RWPE1 (cell line): ENCODE measurements at regions of chr12 and their contacts with region 1.

Region 1: DNA sequence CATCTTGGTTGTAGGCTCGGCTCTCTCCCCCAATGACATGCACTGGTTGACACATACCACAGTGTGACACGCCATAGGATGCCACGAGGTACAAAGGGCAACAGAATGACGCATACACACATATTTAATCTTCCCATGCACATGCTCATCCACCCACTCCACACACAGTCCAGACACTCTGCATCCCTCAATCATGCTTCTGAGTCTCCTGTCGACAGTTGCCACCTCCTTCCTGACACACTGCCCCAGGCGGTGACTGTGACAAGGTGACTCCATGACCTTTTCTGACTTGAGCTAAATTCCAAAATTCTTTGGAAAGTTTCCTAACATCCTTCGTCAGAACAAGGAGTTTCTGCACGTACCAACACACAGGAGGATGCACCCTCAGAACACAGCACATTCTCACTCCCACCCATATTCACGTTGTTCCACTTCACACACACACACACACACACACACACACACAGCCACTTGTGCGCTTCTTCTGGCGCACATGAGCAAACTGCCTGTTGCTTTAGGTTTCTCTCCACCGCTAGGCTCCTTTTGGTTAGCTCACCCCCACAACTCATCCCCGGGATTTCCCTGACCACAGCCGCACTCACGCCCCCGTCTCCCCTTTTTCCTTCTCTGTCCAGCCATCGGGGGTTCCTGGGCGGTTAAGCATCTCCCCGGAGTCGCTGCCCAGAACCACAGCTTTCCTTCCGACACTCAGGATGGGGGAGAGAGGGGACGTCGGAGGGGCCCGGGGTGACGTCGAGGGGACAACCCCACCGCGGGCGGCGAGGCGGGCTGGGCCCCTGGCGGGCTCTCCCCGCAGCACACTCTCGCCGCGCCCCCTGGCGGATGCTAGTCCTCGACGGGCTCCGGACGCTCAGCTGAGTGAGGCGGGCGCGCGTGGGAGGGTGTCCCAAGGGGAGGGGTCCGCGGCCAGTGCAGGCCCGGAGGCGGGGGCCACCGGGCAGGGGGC is 524 bp upstream of the WNT1 start:
- DNase-seq: no peak
- H3K27ac ChIP-seq: no peak overlapping the region
- CTCF ChIP-seq: peak; percentile 79

Region 2: GRCh38 chr12:48988030-48988649 is 10.5 kb after region 1 on chr12:
- CTCF ChIA-PET with region 1: interaction called, 30 read pairs
- POLR2A ChIA-PET with region 1: no interaction called
- DNase-seq: peak; percentile 65
- H3K27ac ChIP-seq: no peak overlapping the region
- CTCF ChIP-seq: peak; percentile 85

Region 3: DNA sequence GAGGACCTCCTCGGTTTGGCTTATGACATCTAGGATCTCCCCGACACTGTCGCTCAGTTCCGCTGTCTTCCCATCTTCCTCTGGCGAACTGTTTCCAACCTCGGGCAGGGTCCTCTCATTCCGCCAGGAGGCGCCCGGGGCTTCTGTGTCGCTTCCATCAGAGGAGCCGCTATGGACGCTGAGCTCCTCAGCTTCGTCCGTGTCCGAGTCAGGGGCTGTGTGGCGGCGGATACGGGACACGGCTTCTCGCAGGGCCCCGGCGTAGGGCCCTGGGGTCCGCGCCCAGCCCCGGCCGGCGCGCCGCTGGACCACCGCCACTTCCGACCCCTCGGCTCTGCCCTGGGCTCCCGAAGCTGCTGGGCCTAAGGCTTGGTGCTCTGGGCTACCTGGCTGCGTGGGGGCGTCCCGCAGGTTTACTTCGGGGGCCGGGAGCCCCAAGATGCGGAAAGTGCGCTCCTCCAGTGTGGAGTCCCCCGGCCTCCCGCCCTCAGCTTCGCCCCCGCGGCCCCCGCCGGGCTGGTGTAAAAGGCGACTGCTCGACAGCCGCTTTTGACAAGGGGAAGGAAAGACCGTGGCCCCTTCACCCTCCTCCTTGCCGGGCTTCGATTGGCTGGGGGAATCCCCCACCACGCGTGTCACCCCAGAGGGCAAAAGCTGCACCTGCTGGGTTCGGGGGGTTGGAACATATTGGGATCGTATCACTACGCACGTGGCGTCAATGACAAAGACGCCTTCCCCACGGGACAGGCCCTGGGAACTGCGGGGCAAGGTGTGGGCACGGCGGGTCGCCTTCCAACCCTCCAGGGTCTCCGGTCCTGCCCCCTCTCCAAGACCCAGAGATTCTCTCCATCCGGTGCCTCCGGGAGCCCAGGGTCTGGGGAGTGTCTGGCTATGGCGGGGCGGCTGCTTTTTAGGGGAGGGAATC is 19.5 kb after region 1 on chr12:
- CTCF ChIA-PET with region 1: interaction called, 14 read pairs
- POLR2A ChIA-PET with region 1: no interaction called
- DNase-seq: no peak
- H3K27ac ChIP-seq: no peak overlapping the region
- CTCF ChIP-seq: peak; percentile 65